ENCODE measurements at regions of chr5 and their contacts with region 1.

Region 1: DNA sequence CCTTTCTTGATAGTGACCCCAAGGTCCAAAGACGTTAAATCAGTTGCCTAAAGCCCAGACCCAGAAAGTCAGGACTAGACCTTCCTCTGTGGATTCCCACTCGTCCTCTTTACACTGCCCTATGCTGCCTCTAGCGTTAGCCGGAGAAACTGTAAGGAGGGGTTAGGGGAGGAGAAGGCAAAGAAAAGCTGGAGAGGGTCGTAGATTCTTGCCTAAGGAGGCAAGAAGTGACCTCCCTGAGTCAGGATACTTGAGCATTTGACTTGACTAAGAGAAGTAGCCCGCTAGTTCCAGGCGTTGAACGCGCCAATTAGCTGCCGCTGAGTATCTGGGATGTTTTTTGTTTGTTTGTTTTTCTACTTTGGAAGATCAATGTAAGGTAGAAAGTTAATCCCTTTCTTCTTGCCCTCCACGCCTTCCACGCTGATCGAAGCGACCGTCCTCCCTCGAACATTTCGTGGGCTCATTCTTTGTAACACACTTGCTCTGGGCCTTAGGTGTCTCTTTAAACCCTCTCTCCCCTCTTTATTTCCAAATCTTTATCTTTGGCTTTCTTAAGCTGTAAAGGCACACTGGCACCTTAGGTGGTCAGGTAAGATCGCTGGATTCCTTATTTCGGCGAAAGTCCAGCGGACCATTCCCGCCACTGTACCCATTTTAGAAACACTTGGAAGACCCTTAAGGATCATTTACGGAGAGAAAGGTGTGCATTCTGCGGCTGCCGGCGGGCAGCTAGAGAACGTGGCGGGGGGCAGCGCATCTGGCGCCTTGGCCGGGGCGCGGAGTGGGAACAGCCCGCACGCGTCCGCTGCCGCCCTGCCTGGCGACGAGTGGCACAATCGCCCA is 5.1 kb upstream of the RGMB start:
- DNase-seq: peak; percentile 74
- H3K4me3 Mint-ChIP-seq: peak overlapping the region; percentile 82
- H3K27ac Mint-ChIP-seq: peak overlapping the region; percentile 89
- H3K4me1 Mint-ChIP-seq: peaks cover 31% of the 10 kb centered on the region
- H3K27me3 Mint-ChIP-seq: no peaks in the 10 kb centered on the region
- CTCF ChIP-seq: peak; percentile 94

Region 2: DNA sequence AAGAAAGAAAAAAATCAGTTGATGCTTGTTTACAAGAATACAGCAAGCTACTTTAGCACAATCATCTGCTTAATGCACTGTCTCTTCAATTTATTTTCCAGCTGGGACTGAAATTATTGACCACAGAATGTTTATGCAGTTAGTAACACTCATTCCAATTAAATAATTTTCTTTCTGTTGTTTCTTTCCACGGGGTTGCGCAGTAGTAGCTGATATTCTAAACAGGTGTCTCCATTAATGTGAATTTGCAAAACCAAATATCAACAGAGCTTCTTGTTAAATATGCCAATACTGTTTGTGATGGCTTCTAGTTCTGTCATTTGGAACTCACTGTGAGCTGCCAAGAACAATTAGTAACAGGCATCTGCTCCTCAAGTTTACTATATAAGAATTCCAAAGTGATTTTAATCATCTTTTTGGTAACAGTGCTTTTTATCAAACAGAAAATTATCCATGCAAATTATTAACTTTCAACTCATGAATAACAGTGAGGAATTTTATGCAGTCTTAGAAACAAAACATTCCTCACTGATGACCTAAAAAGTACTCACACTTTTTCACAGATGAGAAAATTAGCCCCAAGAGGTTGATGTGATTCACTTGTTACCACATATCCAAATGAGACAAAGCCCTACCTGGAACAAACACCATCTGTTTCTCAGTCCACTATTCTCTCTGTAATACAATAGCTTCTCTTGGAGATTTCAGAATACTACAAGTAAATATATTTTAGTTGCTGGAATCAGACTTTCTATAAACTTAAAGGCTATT is 562.5 kb before region 1 on chr5:
- CTCF ChIA-PET with region 1: no interaction called
- intact Hi-C with region 1: loop called (anchors 5 kb)
- DNase-seq: no peak
- H3K4me3 Mint-ChIP-seq: no peak overlapping the region
- H3K27ac Mint-ChIP-seq: no peak overlapping the region
- H3K4me1 Mint-ChIP-seq: peaks cover 9% of the 10 kb centered on the region
- H3K27me3 Mint-ChIP-seq: no peaks in the 10 kb centered on the region
- CTCF ChIP-seq: no peak

Region 3: DNA sequence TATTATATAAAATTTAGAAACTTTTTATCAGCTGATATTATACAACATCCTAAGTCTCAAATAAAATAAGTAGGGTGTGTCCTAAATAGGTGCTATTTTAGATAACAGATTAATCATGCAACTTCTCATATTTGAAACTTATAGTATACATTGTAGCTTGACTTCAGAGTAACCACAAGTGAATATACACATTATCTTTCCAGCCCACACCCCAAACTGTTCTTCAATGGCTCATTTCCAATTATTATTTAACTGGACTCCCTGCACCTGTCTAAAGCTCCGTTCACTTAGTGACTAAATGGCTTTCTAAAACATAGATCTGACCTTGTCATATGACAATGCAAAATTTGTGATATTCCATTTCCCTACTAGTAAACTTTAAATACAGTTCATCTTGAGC is 485.9 kb before region 1 on chr5:
- CTCF ChIA-PET with region 1: no interaction called
- intact Hi-C with region 1: no loop called
- DNase-seq: no peak
- H3K4me3 Mint-ChIP-seq: no peak overlapping the region
- H3K27ac Mint-ChIP-seq: no peak overlapping the region
- H3K4me1 Mint-ChIP-seq: no peaks in the 10 kb centered on the region
- H3K27me3 Mint-ChIP-seq: no peaks in the 10 kb centered on the region
- CTCF ChIP-seq: no peak

Region 4: GRCh38 chr5:98454904-98455303 is 313.5 kb before region 1 on chr5:
- CTCF ChIA-PET with region 1: interaction called, 12 read pairs
- intact Hi-C with region 1: loop called (anchors 2 kb)
- DNase-seq: no peak
- H3K4me3 Mint-ChIP-seq: no peak overlapping the region
- H3K27ac Mint-ChIP-seq: no peak overlapping the region
- H3K4me1 Mint-ChIP-seq: no peaks in the 10 kb centered on the region
- H3K27me3 Mint-ChIP-seq: no peaks in the 10 kb centered on the region
- CTCF ChIP-seq: no peak

Region 5: GRCh38 chr5:98735806-98736507 is 32.4 kb before region 1 on chr5:
- CTCF ChIA-PET with region 1: no interaction called
- intact Hi-C with region 1: no loop called
- DNase-seq: no peak
- H3K4me3 Mint-ChIP-seq: no peak overlapping the region
- H3K27ac Mint-ChIP-seq: no peak overlapping the region
- H3K4me1 Mint-ChIP-seq: no peaks in the 10 kb centered on the region
- H3K27me3 Mint-ChIP-seq: no peaks in the 10 kb centered on the region
- CTCF ChIP-seq: no peak

Region 6: DNA sequence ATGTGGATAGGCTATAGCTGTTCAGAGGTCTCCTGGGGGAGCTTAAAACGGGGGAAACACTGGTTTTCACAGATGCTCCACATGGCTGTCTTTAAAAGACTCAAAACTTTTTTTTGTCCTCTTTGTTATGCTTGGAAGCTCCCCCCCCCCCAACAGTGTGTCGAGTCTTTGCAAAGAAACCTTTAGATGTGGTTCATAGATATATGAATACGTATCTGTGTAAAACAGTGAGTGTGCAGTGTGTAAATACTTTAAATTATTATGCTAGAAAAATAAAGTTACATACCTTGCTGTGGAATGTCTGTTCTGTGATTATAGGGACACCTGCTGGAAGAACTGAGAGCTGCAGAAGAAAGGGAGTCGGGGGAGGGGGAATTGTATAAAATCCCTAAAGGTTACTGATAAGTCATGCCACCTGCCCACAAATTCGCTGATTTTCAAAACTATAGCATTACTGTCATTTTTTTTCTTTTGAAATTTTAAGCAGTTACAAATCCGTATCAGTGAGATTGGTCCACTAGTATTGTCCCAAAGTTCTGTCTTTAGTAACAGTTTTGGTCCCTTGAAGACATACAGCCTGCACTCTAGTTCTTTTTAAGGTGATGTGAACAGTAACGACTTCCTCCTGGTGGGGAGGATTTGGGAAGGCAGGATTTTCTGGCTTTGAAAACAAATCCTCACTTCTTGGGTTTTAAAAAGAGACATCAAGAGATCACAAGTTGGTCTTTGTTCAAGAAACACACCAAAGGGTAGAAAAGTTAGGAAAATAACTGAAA is 28.0 kb after region 1 on chr5:
- CTCF ChIA-PET with region 1: interaction called, 11 read pairs
- intact Hi-C with region 1: loop called (anchors 2 kb)
- DNase-seq: peak; percentile 70
- H3K4me3 Mint-ChIP-seq: no peak overlapping the region
- H3K27ac Mint-ChIP-seq: no peak overlapping the region
- H3K4me1 Mint-ChIP-seq: peaks cover 7% of the 10 kb centered on the region
- H3K27me3 Mint-ChIP-seq: no peaks in the 10 kb centered on the region
- CTCF ChIP-seq: peak; percentile 81